ENCODE measurements at regions of chr2 and their contacts with region 1.

Region 1: GRCh38 chr2:187429989-187430388 is 18.1 kb downstream of the CALCRL start:
- ATAC-seq: peak in 7 of 8 experiments; percentile 69 to 87 (median 78)
- H3K4me3 ChIP-seq: no peak overlapping the region
- H3K27ac ChIP-seq: no peak overlapping the region
- H3K4me1 ChIP-seq: peaks cover 0 to 12% of the 10 kb centered on the region in 2 donors

Region 2: GRCh38 chr2:186820303-186820702 is 609.7 kb before region 1 on chr2:
- in situ Hi-C with region 1: no loop called
- ATAC-seq: no peak
- H3K4me3 ChIP-seq: no peak overlapping the region
- H3K27ac ChIP-seq: no peak overlapping the region
- H3K4me1 ChIP-seq: no peaks in the 10 kb centered on the region

Region 3: GRCh38 chr2:186862869-186863709 is 566.9 kb before region 1 on chr2:
- in situ Hi-C with region 1: loop called in 2 of 9 experiments (anchors 25 kb)
- ATAC-seq: peak in 4 of 8 experiments; percentile 45 to 77 (median 60)
- H3K4me3 ChIP-seq: no peak overlapping the region
- H3K27ac ChIP-seq: no peak overlapping the region
- H3K4me1 ChIP-seq: peaks cover 0 to 2% of the 10 kb centered on the region in 2 donors

Region 4: DNA sequence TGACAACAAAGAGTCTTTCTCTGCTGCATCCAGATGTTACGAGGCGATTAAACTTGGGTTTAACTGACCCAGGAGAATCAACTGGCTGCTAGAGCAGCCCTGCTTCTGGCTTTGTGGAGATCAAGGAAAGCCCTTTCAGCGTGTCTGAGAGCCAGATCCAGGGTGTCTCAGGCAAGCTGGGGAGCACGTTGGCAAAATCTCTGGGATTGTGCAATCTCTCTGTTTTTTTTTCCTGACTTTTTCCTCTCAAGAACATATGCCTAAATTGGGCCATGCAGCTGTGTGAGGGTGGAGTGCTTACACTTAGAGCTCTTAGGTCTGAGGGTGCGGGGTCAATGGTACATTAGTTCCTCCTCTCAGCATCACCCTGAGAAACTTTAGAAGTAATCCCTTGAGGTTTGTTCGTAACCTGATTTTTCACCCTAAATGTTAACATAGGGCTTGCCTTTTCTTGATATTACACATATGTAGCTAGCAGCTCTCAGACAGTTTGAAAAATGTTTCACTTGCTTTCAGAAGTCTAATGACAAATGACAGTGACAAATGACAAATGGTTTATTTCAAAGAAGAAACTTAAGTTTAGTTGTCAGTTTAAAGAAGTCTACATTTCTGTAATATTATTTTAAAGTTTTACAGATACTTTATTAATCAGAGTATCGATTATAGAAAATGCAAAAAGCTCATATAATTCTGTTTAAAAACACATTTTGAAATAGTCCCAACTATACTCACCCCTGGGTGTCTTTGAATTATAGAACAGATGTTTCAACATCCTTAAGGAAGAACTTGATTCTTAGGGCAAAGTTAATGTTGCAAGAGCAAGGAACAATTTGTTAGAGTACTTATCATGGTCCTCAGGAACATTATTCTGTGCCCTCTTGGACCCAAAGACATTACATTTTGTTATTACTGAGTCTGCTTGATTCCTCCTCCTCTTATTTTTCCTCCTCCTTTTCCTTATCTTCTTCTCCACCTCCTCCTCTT is 542.6 kb before region 1 on chr2:
- in situ Hi-C with region 1: loop called in 1 of 9 experiments (anchors 25 kb)
- ATAC-seq: peak in 3 of 8 experiments; percentile 23 to 93 (median 83)
- H3K4me3 ChIP-seq: no peak overlapping the region
- H3K27ac ChIP-seq: no peak overlapping the region
- H3K4me1 ChIP-seq: peaks cover 2 to 15% of the 10 kb centered on the region in 2 donors

Region 5: DNA sequence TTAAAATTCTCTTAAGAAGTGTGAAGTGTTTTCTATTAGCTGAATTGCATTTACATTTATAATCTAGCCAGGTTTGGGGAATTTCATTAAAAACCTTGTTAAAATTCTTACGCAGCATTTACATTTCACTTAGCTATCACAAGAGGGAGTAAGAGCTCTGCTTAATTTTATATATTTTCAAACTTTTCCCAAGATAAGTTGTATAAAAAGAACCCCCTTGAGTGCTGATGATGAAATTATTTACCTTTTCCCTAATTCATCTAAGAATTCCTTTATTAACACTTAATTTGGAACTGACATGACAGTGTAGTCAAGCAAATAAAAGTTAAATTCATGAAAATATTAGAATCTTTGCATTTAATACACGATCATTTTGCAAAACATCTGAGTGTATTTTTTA is 526.8 kb before region 1 on chr2:
- in situ Hi-C with region 1: loop called in 2 of 9 experiments (anchors 25 kb)
- ATAC-seq: no peak
- H3K4me3 ChIP-seq: no peak overlapping the region
- H3K27ac ChIP-seq: no peak overlapping the region
- H3K4me1 ChIP-seq: peaks cover 0 to 5% of the 10 kb centered on the region in 2 donors

Region 6: DNA sequence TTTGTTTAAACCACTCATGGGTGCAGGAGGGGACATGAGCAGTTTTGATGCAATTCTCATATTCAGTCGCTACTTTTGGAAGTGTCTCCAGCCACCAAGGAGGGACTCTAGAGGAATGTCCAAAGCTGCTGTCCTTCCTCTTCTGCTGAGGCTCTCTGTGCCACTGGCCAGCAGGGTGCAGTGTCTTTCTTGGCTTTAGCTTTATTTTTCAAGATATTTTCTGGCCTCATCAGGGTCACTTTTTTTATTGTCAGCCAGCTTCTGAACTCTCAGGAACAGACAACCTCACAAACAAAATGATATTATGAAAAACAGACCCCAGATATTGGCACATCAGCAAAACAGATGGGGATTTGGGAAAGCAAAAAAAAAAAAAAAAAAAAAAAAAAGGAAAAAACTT is 291.7 kb before region 1 on chr2:
- in situ Hi-C with region 1: loop called in 2 of 9 experiments (anchors 25 kb)
- ATAC-seq: peak in 2 of 8 experiments; percentile 67 to 73
- H3K4me3 ChIP-seq: no peak overlapping the region
- H3K27ac ChIP-seq: no peak overlapping the region
- H3K4me1 ChIP-seq: no peaks in the 10 kb centered on the region

Region 7: GRCh38 chr2:187168720-187169713 is 261.0 kb before region 1 on chr2:
- in situ Hi-C with region 1: loop called in 1 of 9 experiments (anchors 25 kb)
- ATAC-seq: peak in 1 of 8 experiments; percentile 31
- H3K4me3 ChIP-seq: no peak overlapping the region
- H3K27ac ChIP-seq: no peak overlapping the region
- H3K4me1 ChIP-seq: peaks cover 5 to 15% of the 10 kb centered on the region in 2 donors

Measured in motor neuron (in vitro differentiated cells).